ENCODE measurements at regions of chr11 and their contacts with region 1.

Region 1: DNA sequence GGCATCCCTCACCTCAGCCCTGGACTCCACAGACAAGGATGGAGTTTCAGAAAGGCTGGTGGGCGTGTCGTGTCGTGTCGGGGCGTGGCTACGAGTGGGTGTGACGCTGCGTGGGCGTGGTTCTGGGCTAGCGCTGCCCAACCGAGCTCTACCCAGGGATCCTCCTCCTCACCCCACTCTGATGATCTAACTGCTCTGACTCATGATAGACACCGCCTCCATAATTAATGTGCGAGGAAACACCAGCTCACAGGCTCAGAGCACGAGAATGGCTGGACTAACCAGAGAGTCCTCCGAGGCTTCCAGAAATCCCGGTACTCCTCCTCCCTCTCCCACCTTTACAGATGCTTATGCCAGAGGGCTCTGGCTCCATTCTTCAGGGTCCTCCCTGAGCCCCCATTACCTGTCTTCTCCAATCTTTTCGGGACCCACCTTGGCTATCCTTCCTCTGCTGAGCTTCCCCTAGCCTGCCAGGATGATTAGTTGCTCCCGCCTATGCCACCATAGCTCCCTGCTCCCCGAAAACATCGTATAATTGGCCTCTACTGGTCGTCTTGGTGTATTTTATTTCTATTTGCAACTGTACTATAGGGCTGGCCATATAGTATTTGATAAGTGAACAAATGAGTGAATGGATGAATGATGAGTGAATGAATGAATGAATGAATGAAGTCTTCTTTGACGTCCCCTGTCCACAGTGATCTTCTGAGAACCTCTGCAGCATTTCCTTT is 21.8 kb downstream of the TMPRSS13 start:
- DNase-seq: peak; percentile 83
- ATAC-seq: peak; percentile 92
- H3K4me3 Mint-ChIP-seq: peak overlapping the region; percentile 35
- H3K27ac Mint-ChIP-seq: peak overlapping the region; percentile 43; the same call in 1 of the 2 replicates
- H3K4me1 Mint-ChIP-seq: peaks cover 15% of the 10 kb centered on the region
- H3K27me3 Mint-ChIP-seq: no peaks in the 10 kb centered on the region
- CTCF ChIP-seq: no peak

Region 2: DNA sequence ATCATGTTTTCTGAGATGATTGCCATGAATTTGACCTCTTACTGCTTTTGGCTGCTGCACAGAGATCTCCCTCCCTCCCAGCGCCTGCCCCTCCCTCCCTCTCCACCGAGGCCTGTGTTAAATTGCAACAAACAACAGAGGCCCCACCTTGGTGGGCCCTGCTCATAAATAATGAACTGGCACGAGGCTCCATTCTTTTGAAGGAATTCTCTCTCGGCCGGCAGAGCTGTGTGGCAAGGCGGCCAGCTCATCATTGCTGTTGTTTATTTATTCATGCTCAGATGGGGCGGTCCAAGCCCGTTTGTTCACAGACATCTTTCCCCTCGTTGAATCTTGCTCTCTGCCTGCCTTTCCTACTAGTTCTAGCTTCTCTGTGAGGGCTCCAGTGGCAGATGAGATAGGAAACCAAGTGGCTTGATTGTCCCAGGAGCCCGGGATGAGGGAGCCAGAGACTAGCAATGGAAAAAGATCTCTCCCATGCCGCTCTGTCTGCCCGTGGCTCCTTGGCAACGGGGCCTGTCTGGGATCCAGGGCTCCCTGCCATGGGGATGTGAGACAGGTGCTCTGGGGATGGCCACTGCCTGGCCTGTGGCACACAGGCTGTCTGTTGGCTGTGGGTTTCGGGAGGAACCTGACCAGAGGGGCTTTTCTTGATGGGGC is 302.9 kb before region 1 on chr11:
- CTCF ChIA-PET with region 1: no interaction called
- POLR2A ChIA-PET with region 1: no interaction called
- DNase-seq: no peak
- ATAC-seq: no peak
- H3K4me3 Mint-ChIP-seq: no peak overlapping the region
- H3K27ac Mint-ChIP-seq: no peak overlapping the region
- H3K4me1 Mint-ChIP-seq: peaks cover 43% of the 10 kb centered on the region
- H3K27me3 Mint-ChIP-seq: peaks cover 11% of the 10 kb centered on the region
- CTCF ChIP-seq: no peak

Region 3: DNA sequence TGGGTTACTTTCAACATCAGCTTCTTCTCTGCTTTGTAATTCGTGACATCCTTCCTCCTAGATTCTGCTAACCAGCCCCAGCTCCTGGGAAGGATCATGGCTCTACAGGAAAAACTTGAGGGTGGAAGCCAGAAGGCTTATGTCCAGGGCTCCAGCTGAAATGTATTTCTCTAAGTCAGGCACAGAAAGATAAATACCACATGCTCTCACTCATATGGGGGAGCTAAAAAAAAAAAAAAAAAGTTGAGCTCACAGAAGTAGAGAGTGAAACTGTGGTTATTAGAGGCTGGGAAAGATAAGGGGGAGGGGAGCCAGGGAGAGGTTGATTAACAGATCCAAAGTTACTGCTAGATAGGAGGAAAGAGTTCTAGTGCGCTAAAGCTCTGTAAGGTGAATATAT is 185.3 kb before region 1 on chr11:
- CTCF ChIA-PET with region 1: no interaction called
- POLR2A ChIA-PET with region 1: no interaction called
- DNase-seq: no peak
- ATAC-seq: no peak
- H3K4me3 Mint-ChIP-seq: no peak overlapping the region
- H3K27ac Mint-ChIP-seq: no peak overlapping the region; the same call in 1 of the 2 replicates
- H3K4me1 Mint-ChIP-seq: peaks cover 68% of the 10 kb centered on the region
- H3K27me3 Mint-ChIP-seq: peaks cover 36% of the 10 kb centered on the region
- CTCF ChIP-seq: no peak

Region 4: GRCh38 chr11:117817368-117818040 is 89.9 kb before region 1 on chr11:
- CTCF ChIA-PET with region 1: interaction called, 15 read pairs
- POLR2A ChIA-PET with region 1: no interaction called
- DNase-seq: peak; percentile 89
- ATAC-seq: peak; percentile 33
- H3K4me3 Mint-ChIP-seq: peak overlapping the region; percentile 48
- H3K27ac Mint-ChIP-seq: no peak overlapping the region
- H3K4me1 Mint-ChIP-seq: peaks cover 56% of the 10 kb centered on the region
- H3K27me3 Mint-ChIP-seq: peaks cover 5% of the 10 kb centered on the region; the same call in 1 of the 2 replicates
- CTCF ChIP-seq: peak; percentile 99

Region 5: DNA sequence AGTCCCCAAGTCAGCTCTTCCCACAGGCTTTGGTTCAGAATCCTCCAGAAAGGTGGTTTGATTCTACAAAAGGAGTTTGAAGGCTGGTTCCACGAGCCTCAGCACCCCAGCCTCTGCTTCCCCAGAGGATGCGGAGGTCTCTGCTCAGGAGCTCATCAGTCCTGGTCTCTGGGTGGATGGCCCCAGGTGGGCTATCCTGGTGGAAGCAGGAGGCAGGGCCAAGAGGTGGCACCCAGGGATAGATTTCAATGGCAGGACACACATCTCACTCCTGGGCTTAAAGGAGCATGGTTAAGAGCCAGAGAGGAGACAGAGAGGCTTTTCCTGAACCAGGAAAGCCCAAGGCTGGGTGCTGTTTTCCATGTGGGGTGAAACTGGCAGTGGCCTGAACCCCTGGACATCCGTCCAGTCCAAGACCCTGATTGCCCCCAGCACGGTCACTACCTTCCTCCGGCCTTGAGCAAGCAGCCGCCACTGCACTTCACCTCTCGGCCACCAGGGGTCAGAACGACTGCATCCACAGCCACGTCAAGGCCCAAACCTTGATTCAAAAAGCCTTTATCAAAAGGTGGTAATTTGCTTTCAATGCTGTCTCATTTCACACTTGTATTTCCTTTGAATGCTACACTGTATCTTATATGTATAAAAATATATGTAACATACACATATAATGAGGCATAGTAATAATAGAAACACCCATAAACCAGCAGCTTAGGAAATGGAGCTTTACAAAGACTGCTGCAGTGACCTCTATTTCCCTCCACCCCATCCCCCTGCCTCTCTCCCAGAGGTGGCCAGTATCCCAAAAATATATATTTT is 63.5 kb before region 1 on chr11:
- CTCF ChIA-PET with region 1: interaction called, 31 read pairs
- POLR2A ChIA-PET with region 1: no interaction called
- DNase-seq: peak; percentile 84
- ATAC-seq: peak; percentile 79
- H3K4me3 Mint-ChIP-seq: no peak overlapping the region
- H3K27ac Mint-ChIP-seq: no peak overlapping the region
- H3K4me1 Mint-ChIP-seq: no peaks in the 10 kb centered on the region
- H3K27me3 Mint-ChIP-seq: no peaks in the 10 kb centered on the region
- CTCF ChIP-seq: peak; percentile 99

Region 6: GRCh38 chr11:117861151-117862018 is 46.0 kb before region 1 on chr11:
- CTCF ChIA-PET with region 1: interaction called, 16 read pairs
- POLR2A ChIA-PET with region 1: no interaction called
- DNase-seq: peak; percentile 89
- ATAC-seq: peak; percentile 100
- H3K4me3 Mint-ChIP-seq: no peak overlapping the region
- H3K27ac Mint-ChIP-seq: peak overlapping the region; percentile 43
- H3K4me1 Mint-ChIP-seq: peaks cover 25% of the 10 kb centered on the region
- H3K27me3 Mint-ChIP-seq: peaks cover 7% of the 10 kb centered on the region
- CTCF ChIP-seq: no peak

Region 7: DNA sequence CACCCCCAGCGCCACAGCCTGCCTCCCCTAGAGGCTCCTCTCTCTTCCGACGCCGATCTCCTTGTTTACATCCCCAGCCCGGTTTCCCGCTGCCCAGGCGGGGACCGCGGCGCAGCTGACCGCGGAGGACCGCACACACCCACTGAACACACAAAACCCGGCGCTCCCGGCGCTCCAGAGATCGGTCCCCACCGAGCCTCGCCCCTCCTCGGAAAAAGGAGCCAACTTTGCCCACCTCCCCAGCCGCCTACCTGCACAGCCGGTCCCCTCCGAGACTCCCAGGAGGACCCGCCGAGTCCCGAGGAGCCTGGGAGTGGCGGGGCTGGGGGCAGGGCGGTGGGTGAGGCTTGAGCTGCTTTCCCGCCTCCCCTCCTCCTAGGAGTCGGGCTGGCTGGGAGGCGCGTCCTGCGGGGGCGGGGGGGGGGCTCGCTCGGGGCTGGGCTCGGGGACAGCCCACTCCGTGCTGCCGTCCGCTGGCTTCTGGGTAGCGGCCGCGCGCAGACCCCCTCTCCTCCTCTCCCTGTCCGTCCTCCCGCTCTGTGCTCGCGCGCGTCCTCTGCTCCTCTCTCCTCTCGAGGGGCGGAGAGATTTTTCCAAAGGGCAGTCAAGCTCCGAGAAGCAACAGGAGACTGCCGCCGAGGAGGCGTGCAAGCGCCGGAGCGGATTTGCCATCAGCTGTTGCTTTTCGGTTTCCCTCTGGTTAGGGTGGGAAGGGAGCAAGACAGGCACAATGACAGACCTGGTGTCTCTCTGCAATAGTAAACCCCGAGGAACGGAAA is 30.9 kb before region 1 on chr11 and contains the start of gene FXYD6:
- CTCF ChIA-PET with region 1: interaction called, 25 read pairs
- POLR2A ChIA-PET with region 1: no interaction called
- DNase-seq: peak; percentile 71
- ATAC-seq: peak; percentile 56
- H3K4me3 Mint-ChIP-seq: peak within 1 kb of the TSS; percentile 95
- H3K27ac Mint-ChIP-seq: no peak within 1 kb of the TSS
- H3K4me1 Mint-ChIP-seq: peaks cover 36% of the 10 kb centered on the region
- H3K27me3 Mint-ChIP-seq: peaks cover 85% of the 10 kb centered on the region
- CTCF ChIP-seq: no peak
- total RNA-seq, gene FXYD6: 26.2 to 31.6 TPM (median 30.1 TPM) in 3 replicates

Region 8: GRCh38 chr11:118084247-118084646 is 176.8 kb after region 1 on chr11:
- CTCF ChIA-PET with region 1: no interaction called
- POLR2A ChIA-PET with region 1: no interaction called
- DNase-seq: no peak
- ATAC-seq: no peak
- H3K4me3 Mint-ChIP-seq: no peak overlapping the region
- H3K27ac Mint-ChIP-seq: no peak overlapping the region; the same call in 1 of the 2 replicates
- H3K4me1 Mint-ChIP-seq: peaks cover 14% of the 10 kb centered on the region
- H3K27me3 Mint-ChIP-seq: no peaks in the 10 kb centered on the region; the same call in 1 of the 2 replicates
- CTCF ChIP-seq: no peak

Region 9: GRCh38 chr11:118184784-118185579 is 277.6 kb after region 1 on chr11:
- CTCF ChIA-PET with region 1: no interaction called
- POLR2A ChIA-PET with region 1: no interaction called
- DNase-seq: no peak
- ATAC-seq: no peak
- H3K4me3 Mint-ChIP-seq: no peak overlapping the region
- H3K27ac Mint-ChIP-seq: no peak overlapping the region
- H3K4me1 Mint-ChIP-seq: peaks cover 15% of the 10 kb centered on the region
- H3K27me3 Mint-ChIP-seq: peaks cover 7% of the 10 kb centered on the region
- CTCF ChIP-seq: no peak